K562 (cell line): ENCODE measurements at regions of chr2 and their contacts with region 1.

Region 1: GRCh38 chr2:102020596-102021181 is 28.9 kb downstream of the IL1R2 start:
- DNase-seq: peak; percentile 79 to 88 (median 84)
- ATAC-seq: peak; percentile 99
- H3K4me3 ChIP-seq: no peak overlapping the region
- H3K27ac ChIP-seq: no peak overlapping the region
- H3K4me1 ChIP-seq: peaks cover 0 to 7% of the 10 kb centered on the region in 2 experiments; a peak in 1 of 5 replicates
- H3K27me3 ChIP-seq: no peaks in the 10 kb centered on the region
- CTCF ChIP-seq: peak; percentile 91 to 97 (median 95)
- EP300 ChIP-seq: no peak
- POLR2A ChIP-seq: no peak
- RAD21 ChIP-seq: peak; percentile 97 to 99

Region 2: DNA sequence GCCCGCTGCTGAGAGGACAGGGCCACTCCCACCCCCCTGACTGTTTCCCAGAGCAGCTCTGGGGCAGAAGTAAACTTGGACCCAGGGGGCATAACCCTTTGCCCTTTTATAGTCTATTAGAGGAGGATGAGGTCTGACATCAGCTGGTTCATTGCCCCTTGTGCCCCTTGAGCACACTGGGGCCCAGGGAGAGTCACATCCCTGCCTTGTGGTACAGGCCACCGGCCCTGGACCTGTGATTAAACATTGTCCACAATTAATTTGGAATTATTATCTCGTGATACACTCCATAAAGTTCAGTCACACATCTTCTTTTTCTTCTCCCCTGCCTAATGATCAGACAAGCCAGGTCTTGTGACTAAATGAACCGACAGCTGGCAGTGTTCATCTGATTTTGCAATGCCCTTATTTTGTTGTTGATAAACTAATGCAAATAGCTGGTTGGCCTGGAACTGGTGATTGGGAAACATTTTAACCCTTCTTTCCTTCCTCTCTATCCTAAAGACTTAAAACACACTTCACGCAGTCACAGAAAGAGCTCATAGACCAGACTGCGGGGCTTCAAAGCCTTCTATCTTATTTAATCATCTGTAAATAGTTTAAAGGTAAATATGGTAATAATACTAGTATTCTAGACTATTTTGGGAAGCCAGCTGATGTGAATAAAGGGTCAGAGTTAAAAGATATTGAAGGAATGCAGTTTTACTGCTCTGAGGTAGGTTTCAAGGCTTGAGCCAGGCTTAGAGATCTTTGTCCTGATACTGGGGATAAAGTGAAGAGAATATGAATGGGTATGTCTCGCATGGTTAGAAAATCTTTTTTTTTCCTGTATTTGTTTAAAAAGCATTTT is 135.2 kb after region 1 on chr2:
- CTCF ChIA-PET with region 1: no interaction called
- POLR2A ChIA-PET with region 1: no interaction called
- in situ Hi-C with region 1: loop called (anchors 5 kb)
- intact Hi-C with region 1: no loop called
- DNase-seq: no peak
- ATAC-seq: no peak
- H3K4me3 ChIP-seq: no peak overlapping the region
- H3K27ac ChIP-seq: no peak overlapping the region
- H3K4me1 ChIP-seq: no peaks in the 10 kb centered on the region
- H3K27me3 ChIP-seq: no peaks in the 10 kb centered on the region
- CTCF ChIP-seq: no peak
- EP300 ChIP-seq: no peak
- POLR2A ChIP-seq: no peak
- RAD21 ChIP-seq: no peak

Region 3: DNA sequence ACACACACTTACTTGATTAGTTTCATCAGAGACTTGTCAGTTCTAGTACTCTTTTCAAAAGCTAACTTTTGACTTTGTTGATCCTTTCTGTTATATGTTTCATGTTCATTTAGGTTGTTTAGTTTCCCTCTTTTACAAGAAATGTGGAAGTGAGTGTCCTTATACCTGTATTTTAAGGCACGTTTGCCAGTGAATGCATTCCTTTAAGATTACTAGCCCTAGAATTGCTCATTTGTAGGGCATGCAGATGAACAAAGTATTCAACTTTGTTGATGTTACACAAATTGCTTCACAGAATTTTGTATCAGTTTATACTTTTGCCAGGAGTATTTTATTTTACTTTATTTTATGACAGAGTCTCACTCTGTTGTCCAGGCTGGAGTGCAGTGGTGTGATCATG is 172.4 kb after region 1 on chr2:
- CTCF ChIA-PET with region 1: no interaction called
- POLR2A ChIA-PET with region 1: no interaction called
- in situ Hi-C with region 1: no loop called
- intact Hi-C with region 1: no loop called
- DNase-seq: no peak
- ATAC-seq: no peak
- H3K4me3 ChIP-seq: no peak overlapping the region
- H3K27ac ChIP-seq: no peak overlapping the region
- H3K4me1 ChIP-seq: no peaks in the 10 kb centered on the region; a peak in 1 of 5 replicates
- H3K27me3 ChIP-seq: no peaks in the 10 kb centered on the region; a peak in 1 of 5 replicates
- CTCF ChIP-seq: no peak
- EP300 ChIP-seq: no peak
- POLR2A ChIP-seq: no peak
- RAD21 ChIP-seq: no peak

Region 4: DNA sequence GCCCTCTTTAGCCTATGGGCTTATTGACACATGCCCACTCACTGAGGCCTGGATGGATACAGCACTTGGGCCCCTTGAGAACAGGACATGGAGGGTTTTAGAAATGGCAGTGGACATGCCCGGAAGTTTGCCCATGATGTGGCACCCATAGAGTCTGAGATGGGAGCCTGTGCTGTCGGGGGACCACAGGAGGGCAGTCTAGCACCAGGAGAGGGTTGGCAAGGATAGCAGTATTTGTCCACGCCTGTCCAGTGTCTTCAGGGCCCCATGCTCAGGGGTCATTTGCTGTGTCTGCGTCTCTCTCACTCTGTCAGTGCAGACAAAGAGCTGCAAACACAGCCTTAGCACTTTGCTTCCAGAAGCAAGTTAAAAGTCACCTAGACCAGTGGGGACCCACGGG is 214.8 kb after region 1 on chr2:
- CTCF ChIA-PET with region 1: interaction called, 25 read pairs
- POLR2A ChIA-PET with region 1: no interaction called
- in situ Hi-C with region 1: loop called (anchors 5 kb)
- intact Hi-C with region 1: loop called (anchors 1 kb)
- DNase-seq: peak in 2 of 4 experiments; percentile 41 to 50
- ATAC-seq: peak; percentile 90
- H3K4me3 ChIP-seq: no peak overlapping the region
- H3K27ac ChIP-seq: no peak overlapping the region
- H3K4me1 ChIP-seq: peaks cover 0 to 3% of the 10 kb centered on the region in 2 experiments; a peak in 2 of 5 replicates
- H3K27me3 ChIP-seq: peaks cover 0 to 4% of the 10 kb centered on the region in 2 experiments; a peak in 1 of 5 replicates
- CTCF ChIP-seq: peak; percentile 53 to 62 (median 58)
- EP300 ChIP-seq: no peak
- POLR2A ChIP-seq: no peak
- RAD21 ChIP-seq: peak; percentile 60 to 78

Region 5: GRCh38 chr2:102442967-102443828 is 422.5 kb after region 1 on chr2:
- CTCF ChIA-PET with region 1: no interaction called
- POLR2A ChIA-PET with region 1: no interaction called
- in situ Hi-C with region 1: loop called (anchors 5 kb)
- intact Hi-C with region 1: loop called (anchors 2 kb)
- DNase-seq: peak in 3 of 4 experiments; percentile 17 to 65 (median 34)
- ATAC-seq: peak; percentile 85
- H3K4me3 ChIP-seq: no peak overlapping the region
- H3K27ac ChIP-seq: no peak overlapping the region
- H3K4me1 ChIP-seq: peaks cover 9 to 17% of the 10 kb centered on the region in 2 experiments; a peak in 4 of 5 replicates
- H3K27me3 ChIP-seq: no peaks in the 10 kb centered on the region
- CTCF ChIP-seq: peak; percentile 71 to 91 (median 87)
- EP300 ChIP-seq: no peak
- POLR2A ChIP-seq: no peak
- RAD21 ChIP-seq: peak; percentile 89 to 96